ENCODE measurements at regions of chr10 and their contacts with region 1.

Region 1: DNA sequence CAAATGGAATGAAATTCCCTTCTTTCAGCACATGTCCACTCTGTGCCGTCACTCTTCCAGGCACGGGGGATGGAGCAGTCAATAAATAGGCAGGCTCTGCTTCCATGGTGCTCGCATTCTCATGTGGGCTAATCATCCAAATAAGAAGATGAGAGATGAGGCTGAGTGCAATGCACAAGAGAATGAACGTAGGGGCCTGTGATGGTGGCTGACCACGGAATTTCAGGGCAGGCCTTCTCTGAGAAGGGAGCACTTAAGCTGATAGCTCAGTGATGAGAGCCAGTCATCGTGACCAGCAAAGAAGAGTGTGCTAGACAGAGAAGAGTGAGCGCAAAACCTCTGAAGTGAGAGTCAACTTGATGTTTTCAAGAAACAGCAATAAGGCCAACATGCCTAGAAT is 47.9 kb downstream of the TAF3 start:
- DNase-seq: no peak
- ATAC-seq: no peak
- H3K4me3 ChIP-seq: no peak overlapping the region
- H3K27ac ChIP-seq: no peak overlapping the region
- H3K4me1 ChIP-seq: no peaks in the 10 kb centered on the region
- H3K27me3 ChIP-seq: no peaks in the 10 kb centered on the region
- CTCF ChIP-seq: no peak
- EP300 ChIP-seq: no peak
- POLR2A ChIP-seq: no peak
- RAD21 ChIP-seq: no peak

Region 2: GRCh38 chr10:7707102-7707501 is 159.1 kb before region 1 on chr10:
- CTCF ChIA-PET with region 1: no interaction called
- POLR2A ChIA-PET with region 1: no interaction called
- RAD21 ChIA-PET with region 1: no interaction called
- SMC1A ChIA-PET with region 1: no interaction called
- in situ Hi-C with region 1: no loop called
- intact Hi-C with region 1: no loop called
- DNase-seq: no peak
- ATAC-seq: no peak
- H3K4me3 ChIP-seq: no peak overlapping the region
- H3K27ac ChIP-seq: no peak overlapping the region
- H3K4me1 ChIP-seq: no peaks in the 10 kb centered on the region
- H3K27me3 ChIP-seq: peaks cover 2 to 10% of the 10 kb centered on the region in 2 experiments
- CTCF ChIP-seq: no peak
- EP300 ChIP-seq: no peak
- POLR2A ChIP-seq: no peak
- RAD21 ChIP-seq: no peak

Region 3: DNA sequence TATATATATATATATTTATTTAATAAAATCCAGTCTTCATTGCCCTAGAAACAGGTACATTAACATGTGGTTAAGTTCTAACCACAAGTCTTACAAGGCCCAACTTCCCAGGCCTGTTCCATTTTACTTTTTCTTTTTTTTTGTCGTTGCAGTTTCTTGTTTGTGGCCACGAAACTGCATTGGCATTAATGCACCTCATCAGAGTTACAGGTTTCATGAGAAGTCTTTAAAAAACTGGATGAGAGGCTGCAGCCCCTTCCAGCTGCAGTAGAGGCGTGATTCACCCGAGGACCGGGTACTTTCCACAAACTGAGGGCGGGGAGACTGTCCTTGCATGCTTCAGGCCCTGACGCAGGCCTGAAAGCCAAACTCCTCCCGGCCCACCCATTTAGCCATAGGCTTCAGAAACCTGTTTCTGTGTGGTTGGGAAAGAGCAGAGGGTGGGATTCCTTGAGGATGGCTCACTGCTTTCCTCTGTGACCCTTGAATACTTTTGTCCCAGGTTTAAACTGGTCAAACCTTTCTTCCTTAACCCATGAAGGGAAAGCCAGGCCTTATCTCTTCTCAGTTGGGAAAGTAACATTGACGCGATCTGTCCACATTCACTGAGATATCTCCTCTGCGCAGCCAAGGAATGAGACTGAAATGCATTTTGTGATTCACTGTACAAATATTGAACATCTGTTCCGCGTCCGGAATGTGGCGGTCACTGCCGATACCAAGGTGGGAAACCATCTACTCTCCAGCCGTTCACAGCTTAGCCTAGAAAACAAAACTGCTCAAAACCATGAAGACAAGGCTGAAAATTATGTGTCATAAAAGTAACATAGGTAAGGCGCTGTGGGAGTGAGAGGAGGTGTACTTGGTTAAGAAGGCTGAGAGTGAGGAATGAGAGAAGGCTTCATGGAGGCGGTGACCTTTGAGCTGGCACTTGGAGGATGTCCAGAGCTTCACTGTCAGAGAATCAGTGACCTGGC is 500.0 kb after region 1 on chr10:
- CTCF ChIA-PET with region 1: no interaction called
- POLR2A ChIA-PET with region 1: no interaction called
- RAD21 ChIA-PET with region 1: no interaction called
- SMC1A ChIA-PET with region 1: no interaction called
- in situ Hi-C with region 1: no loop called
- intact Hi-C with region 1: no loop called
- DNase-seq: peak; percentile 12
- ATAC-seq: peak; percentile 76
- H3K4me3 ChIP-seq: no peak overlapping the region
- H3K27ac ChIP-seq: no peak overlapping the region
- H3K4me1 ChIP-seq: peaks cover 2% of the 10 kb centered on the region
- H3K27me3 ChIP-seq: no peaks in the 10 kb centered on the region
- CTCF ChIP-seq: 0 out of 6 replicates have a peak, but pooled peaks of 1 of the 3 experiments have one; percentile 2
- EP300 ChIP-seq: no peak
- POLR2A ChIP-seq: no peak
- RAD21 ChIP-seq: no peak

Region 4: GRCh38 chr10:9294865-9295264 is 1428.7 kb after region 1 on chr10:
- CTCF ChIA-PET with region 1: no interaction called
- POLR2A ChIA-PET with region 1: no interaction called
- RAD21 ChIA-PET with region 1: no interaction called
- SMC1A ChIA-PET with region 1: interaction called, 3 read pairs
- in situ Hi-C with region 1: loop called (anchors 5 kb)
- intact Hi-C with region 1: loop called (anchors 5 kb)
- DNase-seq: no peak
- ATAC-seq: peak; percentile 44; the same call in 2 of the 3 replicates
- H3K4me3 ChIP-seq: no peak overlapping the region
- H3K27ac ChIP-seq: no peak overlapping the region
- H3K4me1 ChIP-seq: peaks cover 6% of the 10 kb centered on the region
- H3K27me3 ChIP-seq: no peaks in the 10 kb centered on the region
- CTCF ChIP-seq: no peak
- EP300 ChIP-seq: no peak
- POLR2A ChIP-seq: no peak
- RAD21 ChIP-seq: no peak